Heart left ventricle (tissue), 16 donors: ENCODE measurements at regions of chr22 and their contacts with region 1.

Region 1: DNA sequence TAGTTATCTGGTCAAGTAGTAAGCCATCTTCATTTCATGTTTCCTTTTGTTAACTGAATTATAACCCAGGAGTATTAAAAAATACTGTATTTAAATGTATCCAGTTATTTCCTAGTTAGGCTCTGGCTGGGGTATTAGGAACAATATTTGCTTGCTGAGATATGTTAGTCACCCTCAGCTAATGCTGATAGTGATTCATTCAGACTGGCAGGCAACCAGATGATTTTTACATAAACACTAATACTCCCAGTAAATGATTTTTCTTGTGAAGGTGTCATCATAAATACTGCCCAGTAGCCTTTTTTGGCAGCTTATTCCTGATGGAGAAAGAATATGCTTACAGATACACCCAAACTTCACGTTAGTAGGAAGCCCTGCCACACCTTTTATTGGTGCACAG is 8.1 kb downstream of the YWHAH start:
- DNase-seq: no peak
- ATAC-seq: peak in 3 of 4 donors; percentile 19 to 71 (median 44)
- H3K4me3 ChIP-seq: no peak overlapping the region
- H3K27ac ChIP-seq: peak overlapping the region in 8 of 12 donors; percentile 2 to 82 (median 52)
- H3K4me1 ChIP-seq: peaks cover 7 to 78% (median 62%) of the 10 kb centered on the region in 12 donors
- H3K27me3 ChIP-seq: no peaks in the 10 kb centered on the region
- CTCF ChIP-seq: no peak
- POLR2A ChIP-seq: no peak

Region 2: DNA sequence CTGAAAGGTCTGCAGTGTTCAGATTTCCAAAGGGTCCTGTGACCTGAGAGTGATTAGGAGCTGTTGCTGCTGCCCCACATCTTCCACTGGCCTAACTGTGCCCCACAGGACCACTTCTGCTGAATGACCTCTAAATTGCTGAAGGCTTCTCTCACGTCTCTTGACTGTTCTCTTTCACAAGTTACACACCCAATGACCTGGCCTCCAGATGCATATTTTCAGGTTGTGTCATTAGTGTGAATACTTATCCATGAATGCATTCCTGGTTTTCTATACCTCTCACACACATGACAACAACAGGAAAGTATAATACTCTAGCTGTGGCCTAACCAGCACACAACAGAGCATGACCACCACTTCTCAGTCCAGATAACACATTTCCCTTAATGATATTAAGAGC is 217.9 kb before region 1 on chr22:
- intact Hi-C with region 1: no loop called
- DNase-seq: no peak
- ATAC-seq: no peak
- H3K4me3 ChIP-seq: no peak overlapping the region
- H3K27ac ChIP-seq: no peak overlapping the region
- H3K4me1 ChIP-seq: peaks cover 0 to 16% (median 6%) of the 10 kb centered on the region in 12 donors
- H3K27me3 ChIP-seq: no peaks in the 10 kb centered on the region
- CTCF ChIP-seq: no peak
- POLR2A ChIP-seq: no peak

Region 3: GRCh38 chr22:31857247-31857646 is 95.2 kb before region 1 on chr22:
- intact Hi-C with region 1: loop called in 1 of 10 experiments (anchors 10 kb)
- DNase-seq: no peak
- ATAC-seq: no peak
- H3K4me3 ChIP-seq: no peak overlapping the region
- H3K27ac ChIP-seq: no peak overlapping the region
- H3K4me1 ChIP-seq: no peaks in the 10 kb centered on the region
- H3K27me3 ChIP-seq: no peaks in the 10 kb centered on the region
- CTCF ChIP-seq: no peak
- POLR2A ChIP-seq: no peak

Region 4: DNA sequence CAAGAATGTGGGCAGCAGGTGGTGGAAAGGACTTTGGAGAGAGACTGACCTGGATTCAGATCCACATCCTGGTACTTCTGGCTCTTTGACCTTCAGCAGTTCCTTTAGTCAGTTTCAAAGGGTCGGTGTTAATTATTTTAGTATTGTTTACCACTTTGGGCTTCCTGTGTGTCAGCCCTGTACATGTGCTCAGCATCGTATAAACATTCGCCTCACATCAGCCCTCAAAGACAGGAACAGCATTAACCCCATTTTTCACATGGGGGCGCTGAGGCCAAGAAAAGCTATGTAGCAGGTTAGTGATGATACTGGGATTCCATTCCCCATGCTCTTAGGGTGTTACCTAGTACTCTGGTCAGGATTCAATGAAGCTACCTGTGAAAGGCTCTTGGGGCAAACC is 80.2 kb before region 1 on chr22:
- intact Hi-C with region 1: loop called in 3 of 10 experiments (anchors 5 to 10 kb)
- DNase-seq: no peak
- ATAC-seq: peak in 1 of 4 donors; percentile 36
- H3K4me3 ChIP-seq: no peak overlapping the region
- H3K27ac ChIP-seq: no peak overlapping the region
- H3K4me1 ChIP-seq: peaks cover 0 to 14% (median 0%) of the 10 kb centered on the region in 12 donors
- H3K27me3 ChIP-seq: no peaks in the 10 kb centered on the region
- CTCF ChIP-seq: peak in 6 of 12 donors; percentile 12 to 39 (median 21)
- POLR2A ChIP-seq: no peak